Naive thymus-derived CD4-positive, alpha-beta T cell (primary cell): ENCODE measurements at regions of chr19 and their contacts with region 1.

Region 1: DNA sequence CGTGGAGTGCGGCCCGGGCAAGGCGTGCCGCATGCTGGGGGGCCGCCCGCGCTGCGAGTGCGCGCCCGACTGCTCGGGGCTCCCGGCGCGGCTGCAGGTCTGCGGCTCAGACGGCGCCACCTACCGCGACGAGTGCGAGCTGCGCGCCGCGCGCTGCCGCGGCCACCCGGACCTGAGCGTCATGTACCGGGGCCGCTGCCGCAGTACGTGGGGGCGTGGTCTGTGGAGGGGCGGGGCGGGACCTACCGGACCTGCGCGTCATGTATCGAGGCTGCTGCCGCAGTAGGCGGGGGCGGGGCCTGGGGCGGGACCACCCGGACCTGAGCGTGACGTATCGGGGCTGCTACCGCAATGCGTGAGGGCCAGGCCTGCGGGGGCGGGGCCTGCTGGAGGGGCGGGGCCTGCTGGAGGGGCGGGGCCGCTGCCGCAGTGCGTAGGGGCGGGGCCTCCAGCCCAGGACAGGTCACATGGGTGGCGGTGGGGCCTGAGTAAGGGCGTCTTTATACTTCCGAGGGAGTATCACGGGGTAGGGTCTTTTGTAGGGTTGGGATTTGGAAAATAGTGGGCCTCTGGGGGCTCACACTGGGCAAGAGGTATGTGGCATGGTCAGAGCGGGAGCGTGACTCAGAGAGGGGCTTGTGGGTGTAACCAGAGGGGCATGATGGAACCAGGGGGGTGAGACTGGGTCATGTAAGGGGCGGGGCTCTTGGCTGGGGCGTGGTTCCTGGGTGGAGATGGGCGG is 4.3 kb downstream of the FSTL3 start:
- DNase-seq: peak; percentile 94 to 100 (median 97)
- ATAC-seq: peak; percentile 91
- H3K4me3 ChIP-seq: peak overlapping the region; percentile 78
- H3K4me3 Mint-ChIP-seq: peak overlapping the region; percentile 77 to 95 (median 92)
- H3K27ac ChIP-seq: peak overlapping the region; percentile 82
- H3K27ac Mint-ChIP-seq: peak overlapping the region; percentile 89 to 100 (median 98)
- H3K4me1 ChIP-seq: peaks cover 5 to 12% of the 10 kb centered on the region in 2 donors
- H3K4me1 Mint-ChIP-seq: peaks cover 0 to 8% (median 2%) of the 10 kb centered on the region in 7 donors
- H3K27me3 ChIP-seq: peaks cover 0 to 2% of the 10 kb centered on the region in 2 donors
- H3K27me3 Mint-ChIP-seq: peaks cover under 1 to 10% (median under 1%) of the 10 kb centered on the region in 5 donors

Region 2: GRCh38 chr19:506404-507285 is 173.8 kb before region 1 on chr19:
- CTCF ChIA-PET with region 1: no interaction called
- POLR2A ChIA-PET with region 1: interaction called, 3 read pairs
- intact Hi-C with region 1: loop called in 1 of 2 experiments (anchors 2 kb)
- DNase-seq: peak; percentile 88 to 99 (median 98)
- ATAC-seq: peak; percentile 67
- H3K4me3 ChIP-seq: peak overlapping the region; percentile 100
- H3K4me3 Mint-ChIP-seq: peak overlapping the region; percentile 89 to 100 (median 97)
- H3K27ac ChIP-seq: peak overlapping the region; percentile 87
- H3K27ac Mint-ChIP-seq: peak overlapping the region; percentile 96 to 100 (median 99)
- H3K4me1 ChIP-seq: peaks cover 29 to 40% of the 10 kb centered on the region in 2 donors
- H3K4me1 Mint-ChIP-seq: peaks cover 21 to 49% (median 46%) of the 10 kb centered on the region in 7 donors
- H3K27me3 ChIP-seq: no peaks in the 10 kb centered on the region
- H3K27me3 Mint-ChIP-seq: no peaks in the 10 kb centered on the region

Region 3: DNA sequence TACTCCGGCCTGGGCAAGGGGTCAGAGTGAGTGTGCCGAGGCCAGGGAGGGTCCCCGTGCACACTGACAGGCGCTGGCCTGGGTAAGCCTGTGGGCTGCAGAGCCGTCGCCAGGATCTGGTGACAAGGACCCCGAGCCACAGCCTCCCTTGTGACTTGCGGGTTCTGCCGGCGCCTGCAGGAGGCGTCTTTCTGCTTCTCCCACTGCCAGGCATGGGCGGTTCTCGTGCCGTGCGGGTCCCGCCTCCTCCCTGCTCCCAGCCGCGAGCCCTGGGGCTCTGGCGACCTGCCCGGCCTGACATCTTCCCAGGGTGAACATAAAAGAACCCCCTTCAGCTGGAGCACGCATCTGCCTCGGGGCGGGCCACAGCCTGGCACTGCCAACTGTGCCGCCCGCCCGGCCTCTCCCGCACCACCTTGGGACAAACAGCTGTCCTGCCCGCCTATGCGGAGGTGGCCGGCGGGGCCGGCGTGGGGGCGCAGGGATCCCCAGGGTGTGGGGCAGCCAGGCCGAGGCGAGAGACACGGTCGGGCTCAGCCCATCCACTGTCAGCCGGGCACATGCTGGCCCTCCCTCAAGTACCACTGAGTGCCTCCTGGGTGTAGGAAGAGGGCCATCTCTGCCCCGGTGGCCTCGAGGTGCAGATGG is 92.2 kb before region 1 on chr19:
- CTCF ChIA-PET with region 1: interaction called, 6 read pairs
- POLR2A ChIA-PET with region 1: no interaction called
- intact Hi-C with region 1: loop called in 1 of 2 experiments (anchors 1 kb)
- DNase-seq: peak; percentile 35 to 72 (median 57)
- ATAC-seq: peak; percentile 66
- H3K4me3 ChIP-seq: no peak overlapping the region
- H3K4me3 Mint-ChIP-seq: peak overlapping the region in 8 of 10 donors; percentile 28 to 76 (median 48)
- H3K27ac ChIP-seq: no peak overlapping the region
- H3K27ac Mint-ChIP-seq: no peak overlapping the region
- H3K4me1 ChIP-seq: peaks cover 10 to 12% of the 10 kb centered on the region in 2 donors
- H3K4me1 Mint-ChIP-seq: peaks cover 0 to 11% (median 4%) of the 10 kb centered on the region in 7 donors
- H3K27me3 ChIP-seq: peaks cover 0 to 10% of the 10 kb centered on the region in 2 donors
- H3K27me3 Mint-ChIP-seq: peaks cover 0 to 31% (median 8%) of the 10 kb centered on the region in 5 donors

Region 4: GRCh38 chr19:639253-640160 is 41.0 kb before region 1 on chr19 and contains the start of gene FGF22:
- CTCF ChIA-PET with region 1: no interaction called
- POLR2A ChIA-PET with region 1: no interaction called
- intact Hi-C with region 1: loop called in 1 of 2 experiments (anchors 1 kb)
- DNase-seq: peak; percentile 84 to 95 (median 91)
- ATAC-seq: peak; percentile 97
- H3K4me3 ChIP-seq: peak within 1 kb of the TSS; percentile 55
- H3K4me3 Mint-ChIP-seq: peak within 1 kb of the TSS; percentile 76 to 92 (median 84)
- H3K27ac ChIP-seq: peak within 1 kb of the TSS; percentile 64
- H3K27ac Mint-ChIP-seq: peak within 1 kb of the TSS; percentile 78 to 95 (median 89)
- H3K4me1 ChIP-seq: peaks cover 10 to 15% of the 10 kb centered on the region in 2 donors
- H3K4me1 Mint-ChIP-seq: peaks cover 5 to 13% (median 6%) of the 10 kb centered on the region in 7 donors
- H3K27me3 ChIP-seq: no peaks in the 10 kb centered on the region
- H3K27me3 Mint-ChIP-seq: peaks cover 0 to 3% (median 0%) of the 10 kb centered on the region in 5 donors
- total RNA-seq, gene FGF22: 0.17 to 1.8 (median 0.95) TPM in 4 of 5 experiments, not detected in the other

Region 5: GRCh38 chr19:709965-710571 is 29.6 kb after region 1 on chr19:
- CTCF ChIA-PET with region 1: no interaction called
- POLR2A ChIA-PET with region 1: no interaction called
- intact Hi-C with region 1: no loop called
- DNase-seq: no peak
- ATAC-seq: no peak
- H3K4me3 ChIP-seq: no peak overlapping the region
- H3K4me3 Mint-ChIP-seq: no peak overlapping the region
- H3K27ac ChIP-seq: no peak overlapping the region
- H3K27ac Mint-ChIP-seq: no peak overlapping the region
- H3K4me1 ChIP-seq: no peaks in the 10 kb centered on the region
- H3K4me1 Mint-ChIP-seq: peaks cover 0 to 8% (median 0%) of the 10 kb centered on the region in 7 donors
- H3K27me3 ChIP-seq: peaks cover 0 to 5% of the 10 kb centered on the region in 2 donors
- H3K27me3 Mint-ChIP-seq: peaks cover 11 to 24% (median 16%) of the 10 kb centered on the region in 5 donors

Region 6: GRCh38 chr19:732148-733069 is 52.0 kb after region 1 on chr19:
- CTCF ChIA-PET with region 1: no interaction called
- POLR2A ChIA-PET with region 1: no interaction called
- intact Hi-C with region 1: loop called in 1 of 2 experiments (anchors 5 kb)
- DNase-seq: no peak
- ATAC-seq: no peak
- H3K4me3 ChIP-seq: no peak overlapping the region
- H3K4me3 Mint-ChIP-seq: no peak overlapping the region
- H3K27ac ChIP-seq: no peak overlapping the region
- H3K27ac Mint-ChIP-seq: no peak overlapping the region
- H3K4me1 ChIP-seq: no peaks in the 10 kb centered on the region
- H3K4me1 Mint-ChIP-seq: peaks cover 0 to 10% (median 5%) of the 10 kb centered on the region in 7 donors
- H3K27me3 ChIP-seq: no peaks in the 10 kb centered on the region
- H3K27me3 Mint-ChIP-seq: no peaks in the 10 kb centered on the region

Region 7: GRCh38 chr19:771332-771785 is 90.9 kb after region 1 on chr19:
- CTCF ChIA-PET with region 1: no interaction called
- POLR2A ChIA-PET with region 1: no interaction called
- intact Hi-C with region 1: no loop called
- DNase-seq: no peak
- ATAC-seq: peak; percentile 67
- H3K4me3 ChIP-seq: no peak overlapping the region
- H3K4me3 Mint-ChIP-seq: no peak overlapping the region
- H3K27ac ChIP-seq: no peak overlapping the region
- H3K27ac Mint-ChIP-seq: no peak overlapping the region
- H3K4me1 ChIP-seq: no peaks in the 10 kb centered on the region
- H3K4me1 Mint-ChIP-seq: peaks cover 0 to 4% (median 0%) of the 10 kb centered on the region in 7 donors
- H3K27me3 ChIP-seq: no peaks in the 10 kb centered on the region
- H3K27me3 Mint-ChIP-seq: peaks cover 0 to 8% (median 4%) of the 10 kb centered on the region in 5 donors

Region 8: GRCh38 chr19:892243-893050 is 212.0 kb after region 1 on chr19:
- CTCF ChIA-PET with region 1: no interaction called
- POLR2A ChIA-PET with region 1: no interaction called
- intact Hi-C with region 1: loop called in 1 of 2 experiments (anchors 1 kb)
- DNase-seq: no peak
- ATAC-seq: peak; percentile 65
- H3K4me3 ChIP-seq: peak overlapping the region; percentile 72
- H3K4me3 Mint-ChIP-seq: peak overlapping the region; percentile 77 to 96 (median 92)
- H3K27ac ChIP-seq: peak overlapping the region; percentile 97
- H3K27ac Mint-ChIP-seq: peak overlapping the region; percentile 65 to 100 (median 99)
- H3K4me1 ChIP-seq: peaks cover 3 to 5% of the 10 kb centered on the region in 2 donors
- H3K4me1 Mint-ChIP-seq: peaks cover 4 to 42% (median 30%) of the 10 kb centered on the region in 7 donors
- H3K27me3 ChIP-seq: no peaks in the 10 kb centered on the region
- H3K27me3 Mint-ChIP-seq: peaks cover 0 to 4% (median 0%) of the 10 kb centered on the region in 5 donors

Region 9: DNA sequence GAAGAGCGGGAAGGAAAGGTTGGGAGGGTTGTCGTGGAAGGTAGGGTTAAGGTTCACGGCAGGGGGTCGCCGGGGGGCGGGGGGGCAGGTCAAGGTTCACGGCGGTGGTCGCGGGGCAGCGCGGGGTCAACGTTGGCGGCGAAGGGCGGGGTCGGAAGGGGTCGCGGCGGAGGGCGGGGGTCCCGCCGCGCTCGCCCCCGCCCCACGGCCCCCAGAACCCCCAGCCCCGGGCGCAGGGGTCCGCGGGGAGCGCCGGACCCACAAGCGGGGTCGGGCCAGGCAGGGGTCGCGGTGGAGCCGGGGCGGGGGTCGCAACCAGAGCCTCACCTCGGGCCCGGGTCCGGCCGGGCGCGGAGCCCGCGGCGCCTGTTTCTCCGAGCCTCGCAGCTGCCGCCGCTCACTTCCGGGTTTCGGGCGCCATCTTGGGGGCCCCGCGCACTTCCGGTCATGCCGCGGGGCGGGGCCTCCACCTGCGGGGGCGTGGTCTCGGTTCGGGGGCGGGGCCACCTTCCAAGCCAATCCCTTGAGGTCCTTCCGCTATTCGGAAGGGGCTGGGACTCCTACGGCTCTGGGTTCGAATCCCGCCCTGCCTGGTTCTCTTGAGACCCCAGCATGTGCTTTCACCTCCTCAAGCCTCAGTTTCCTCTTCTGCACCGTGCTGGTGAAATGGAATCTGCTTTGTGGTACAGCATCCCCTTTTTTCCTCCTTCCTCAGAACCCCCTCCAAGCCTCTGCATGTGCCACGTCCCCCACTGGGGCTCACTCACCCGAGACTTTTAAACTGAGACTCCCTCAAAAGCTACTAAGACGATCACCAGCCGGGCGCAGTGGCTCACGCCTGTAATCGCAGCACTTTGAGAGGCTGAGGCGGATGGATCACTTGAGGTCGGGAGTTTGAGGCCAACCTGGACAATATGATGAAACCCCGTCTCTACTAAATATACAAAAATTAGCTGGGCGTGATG is 493.7 kb after region 1 on chr19 and contains the start of gene SBNO2:
- CTCF ChIA-PET with region 1: no interaction called
- POLR2A ChIA-PET with region 1: no interaction called
- intact Hi-C with region 1: loop called in 1 of 2 experiments (anchors 5 kb)
- DNase-seq: peak; percentile 74 to 98 (median 85)
- ATAC-seq: peak; percentile 96
- H3K4me3 ChIP-seq: peak within 1 kb of the TSS; percentile 77
- H3K4me3 Mint-ChIP-seq: peak within 1 kb of the TSS; percentile 80 to 94 (median 88)
- H3K27ac ChIP-seq: peak within 1 kb of the TSS; percentile 87
- H3K27ac Mint-ChIP-seq: peak within 1 kb of the TSS; percentile 89 to 97 (median 94)
- H3K4me1 ChIP-seq: peaks cover 3 to 17% of the 10 kb centered on the region in 2 donors
- H3K4me1 Mint-ChIP-seq: peaks cover 16 to 43% (median 32%) of the 10 kb centered on the region in 7 donors
- H3K27me3 ChIP-seq: no peaks in the 10 kb centered on the region
- H3K27me3 Mint-ChIP-seq: peaks cover 0 to 2% (median 0%) of the 10 kb centered on the region in 5 donors
- total RNA-seq, gene SBNO2: 88.6 to 137 (median 104) TPM